Endothelial cell of umbilical vein (primary cell): ENCODE measurements at regions of chr6 and their contacts with region 1.

Region 1: GRCh38 chr6:157314705-157315321 is 8.5 kb downstream of the TMEM242 start:
- DNase-seq: peak; percentile 79
- H3K4me3 ChIP-seq: no peak overlapping the region
- H3K27ac ChIP-seq: no peak overlapping the region
- H3K4me1 ChIP-seq: peaks cover 20% of the 10 kb centered on the region
- H3K27me3 ChIP-seq: no peaks in the 10 kb centered on the region
- CTCF ChIP-seq: peak; percentile 59 to 68
- POLR2A ChIP-seq: no peak

Region 2: DNA sequence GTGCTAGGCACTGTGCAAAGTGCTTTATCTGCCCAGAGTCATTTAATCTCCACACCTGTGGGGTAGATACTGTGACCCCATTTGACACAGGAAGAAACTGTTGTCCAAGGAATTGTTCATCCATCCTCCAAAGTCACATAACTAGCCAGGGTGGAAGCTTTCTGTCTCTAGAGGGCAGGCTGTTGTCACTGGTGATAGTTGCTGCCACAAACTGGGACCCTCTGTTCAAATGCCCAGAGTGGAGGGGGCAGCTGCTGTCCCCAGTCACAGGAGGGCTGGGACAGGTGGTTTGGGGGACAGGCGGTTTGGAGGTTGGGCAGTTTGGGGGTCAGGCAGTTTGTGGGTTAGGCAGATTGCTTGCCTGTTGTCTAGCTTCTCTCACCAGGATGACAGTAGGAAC is 24.6 kb after region 1 on chr6:
- CTCF ChIA-PET with region 1: interaction called, 92 read pairs
- POLR2A ChIA-PET with region 1: interaction called, 3 read pairs
- dilution Hi-C with region 1: no loop called
- intact Hi-C with region 1: loop called (anchors 1 kb)
- DNase-seq: no peak
- H3K4me3 ChIP-seq: no peak overlapping the region
- H3K27ac ChIP-seq: no peak overlapping the region
- H3K4me1 ChIP-seq: no peaks in the 10 kb centered on the region
- H3K27me3 ChIP-seq: peaks cover 9 to 20% of the 10 kb centered on the region in 2 experiments
- CTCF ChIP-seq: no peak
- POLR2A ChIP-seq: no peak

Region 3: DNA sequence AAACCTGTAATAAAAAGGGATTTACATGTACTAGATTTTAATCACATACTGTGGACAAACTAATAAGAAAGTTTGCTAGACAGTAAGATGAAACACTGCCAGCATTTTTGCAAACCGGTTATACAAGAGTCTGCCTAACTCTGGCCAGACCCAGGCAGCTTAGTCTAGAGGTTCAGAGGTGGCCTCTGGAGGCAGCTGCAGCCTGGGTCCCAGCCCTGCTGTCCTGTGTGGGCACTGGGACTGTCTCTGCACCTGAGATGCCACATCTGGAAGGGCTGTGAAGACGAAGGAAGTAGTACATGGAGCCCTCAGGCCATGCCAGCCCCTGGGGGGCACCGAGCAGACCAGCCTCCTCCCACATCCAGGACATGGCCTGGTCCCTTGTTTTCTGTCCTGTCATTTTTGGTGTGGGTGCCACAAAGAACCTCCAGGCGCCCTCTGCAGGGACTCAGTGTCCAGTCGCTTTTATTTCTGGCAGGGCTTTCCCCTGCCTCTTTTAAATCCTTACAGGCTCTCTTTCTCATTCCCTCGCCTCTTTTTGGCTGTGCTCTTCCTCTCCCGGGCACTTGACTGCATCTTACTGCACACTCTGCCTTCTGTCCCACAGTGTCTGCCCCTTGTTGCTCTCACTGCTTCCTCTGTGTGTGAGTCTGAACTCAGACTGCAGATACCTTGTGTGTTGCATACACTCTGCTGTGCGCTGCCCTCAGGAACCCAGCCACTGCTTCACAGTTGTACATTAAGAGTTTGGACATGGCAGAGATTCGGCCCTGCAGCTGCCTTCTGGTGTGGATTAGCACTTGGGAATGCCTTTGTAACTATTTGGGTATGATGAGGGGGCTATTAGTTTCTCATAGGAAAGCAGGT is 282.9 kb after region 1 on chr6:
- CTCF ChIA-PET with region 1: interaction called, 38 read pairs
- POLR2A ChIA-PET with region 1: no interaction called
- dilution Hi-C with region 1: no loop called
- intact Hi-C with region 1: loop called (anchors 1 kb)
- DNase-seq: peak; percentile 57
- H3K4me3 ChIP-seq: no peak overlapping the region
- H3K27ac ChIP-seq: no peak overlapping the region
- H3K4me1 ChIP-seq: no peaks in the 10 kb centered on the region
- H3K27me3 ChIP-seq: no peaks in the 10 kb centered on the region
- CTCF ChIP-seq: peak; percentile 50 to 68
- POLR2A ChIP-seq: no peak

Region 4: GRCh38 chr6:157650261-157650640 is 335.4 kb after region 1 on chr6:
- CTCF ChIA-PET with region 1: no interaction called
- POLR2A ChIA-PET with region 1: no interaction called
- dilution Hi-C with region 1: no loop called
- intact Hi-C with region 1: no loop called
- DNase-seq: no peak
- H3K4me3 ChIP-seq: no peak overlapping the region
- H3K27ac ChIP-seq: no peak overlapping the region
- H3K4me1 ChIP-seq: peaks cover 7% of the 10 kb centered on the region
- H3K27me3 ChIP-seq: no peaks in the 10 kb centered on the region
- CTCF ChIP-seq: no peak
- POLR2A ChIP-seq: no peak

Region 5: GRCh38 chr6:157667211-157668008 is 352.6 kb after region 1 on chr6:
- CTCF ChIA-PET with region 1: interaction called, 121 read pairs
- POLR2A ChIA-PET with region 1: interaction called, 4 read pairs
- dilution Hi-C with region 1: no loop called
- intact Hi-C with region 1: loop called (anchors 1 kb)
- DNase-seq: peak; percentile 73
- H3K4me3 ChIP-seq: no peak overlapping the region
- H3K27ac ChIP-seq: no peak overlapping the region
- H3K4me1 ChIP-seq: peaks cover 7% of the 10 kb centered on the region
- H3K27me3 ChIP-seq: no peaks in the 10 kb centered on the region
- CTCF ChIP-seq: peak; percentile 75 to 88
- POLR2A ChIP-seq: no peak

Region 6: GRCh38 chr6:157721437-157722229 is 406.8 kb after region 1 on chr6:
- CTCF ChIA-PET with region 1: no interaction called
- POLR2A ChIA-PET with region 1: no interaction called
- dilution Hi-C with region 1: no loop called
- intact Hi-C with region 1: no loop called
- DNase-seq: no peak
- H3K4me3 ChIP-seq: no peak overlapping the region
- H3K27ac ChIP-seq: no peak overlapping the region
- H3K4me1 ChIP-seq: peaks cover 4% of the 10 kb centered on the region
- H3K27me3 ChIP-seq: peaks cover 6 to 23% of the 10 kb centered on the region in 2 experiments
- CTCF ChIP-seq: no peak
- POLR2A ChIP-seq: no peak

Region 7: DNA sequence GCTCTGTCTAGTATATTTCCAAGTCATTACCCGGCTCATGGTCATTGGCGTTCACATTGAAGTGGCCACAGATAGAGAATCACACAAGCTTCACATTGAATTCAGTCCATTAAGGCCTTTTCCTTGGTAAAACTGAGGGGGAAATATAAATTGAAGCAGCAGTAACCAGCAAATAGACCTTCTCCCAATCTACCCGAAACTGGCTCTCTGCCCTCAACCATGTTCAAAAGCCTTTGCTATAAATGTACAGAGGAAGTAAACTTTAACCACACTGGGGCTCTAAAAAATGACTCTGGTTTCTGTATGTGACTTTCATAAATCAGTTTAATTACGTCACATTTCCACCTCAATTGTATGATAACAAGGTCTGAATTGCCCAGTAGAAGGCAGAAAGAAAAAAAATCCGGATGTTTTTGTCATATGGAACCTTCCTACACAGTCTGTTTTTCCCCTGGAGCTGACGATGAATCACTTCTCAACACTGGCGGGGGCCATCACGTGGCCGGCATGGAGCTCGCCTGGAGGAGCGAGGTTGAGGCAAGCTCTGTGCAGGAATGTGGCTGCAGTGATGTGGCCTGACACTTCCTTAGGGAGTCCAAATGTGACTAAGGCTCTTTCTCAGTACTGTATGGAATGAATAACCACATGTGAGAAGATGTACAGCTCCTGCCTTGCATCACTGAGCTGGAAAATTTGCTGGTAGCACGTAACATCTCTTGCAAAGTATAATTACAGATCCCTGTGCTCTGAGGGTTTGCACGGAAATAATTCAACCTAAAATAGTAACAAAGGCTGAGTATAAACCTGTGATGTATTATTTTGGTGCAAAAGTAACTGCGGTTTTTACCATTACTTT is 449.6 kb after region 1 on chr6:
- CTCF ChIA-PET with region 1: interaction called, 4 read pairs
- POLR2A ChIA-PET with region 1: no interaction called
- dilution Hi-C with region 1: no loop called
- intact Hi-C with region 1: loop called (anchors 5 kb)
- DNase-seq: peak; percentile 99
- H3K4me3 ChIP-seq: peak overlapping the region in 1 of 3 experiments; percentile 4
- H3K27ac ChIP-seq: peak overlapping the region; percentile 97
- H3K4me1 ChIP-seq: peaks cover 51% of the 10 kb centered on the region
- H3K27me3 ChIP-seq: no peaks in the 10 kb centered on the region
- CTCF ChIP-seq: no peak
- POLR2A ChIP-seq: no peak

Region 8: DNA sequence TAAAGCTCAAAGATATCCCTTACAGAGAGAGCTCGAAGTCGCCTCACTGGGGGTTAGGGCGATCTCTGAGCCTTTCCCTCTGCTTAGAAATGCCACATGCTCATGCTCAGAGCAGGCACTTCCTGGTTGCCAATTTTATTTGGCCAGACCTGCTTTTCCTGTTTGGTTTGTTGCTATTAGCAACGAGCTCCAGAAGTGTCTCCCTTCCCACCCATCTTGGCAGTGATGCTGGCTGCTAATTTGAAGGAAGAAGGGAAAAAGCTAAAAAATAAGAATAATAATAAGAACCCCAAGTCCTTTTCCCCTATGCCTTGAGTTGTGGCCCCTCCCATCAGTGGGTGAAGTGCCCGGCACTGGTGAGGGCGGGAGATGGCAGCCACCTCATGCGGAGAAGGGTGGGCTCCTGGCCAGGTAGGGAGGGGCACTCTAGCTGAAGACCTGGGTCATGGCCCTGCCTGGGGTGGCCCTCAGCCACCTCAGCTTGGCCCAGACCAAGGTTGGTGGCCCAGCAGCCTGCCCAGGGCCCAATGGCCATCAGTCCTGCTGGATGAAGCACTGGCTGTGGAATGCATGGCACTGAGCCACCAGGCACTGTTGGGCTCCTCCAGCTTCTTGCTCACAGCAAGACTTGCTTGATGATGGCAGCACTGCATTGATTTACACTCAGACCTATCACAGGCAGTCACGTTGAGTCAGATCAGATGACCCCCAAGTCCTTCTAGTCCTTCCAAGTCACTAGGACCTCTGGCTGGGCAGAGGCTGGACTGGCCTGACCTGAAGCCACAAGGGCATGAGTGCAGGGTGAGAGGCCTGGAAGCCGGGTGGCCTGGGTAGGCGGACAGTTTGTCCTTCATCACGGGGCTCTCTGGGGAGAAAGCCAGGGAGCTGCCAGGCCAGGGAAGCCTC is 745.9 kb after region 1 on chr6:
- CTCF ChIA-PET with region 1: no interaction called
- POLR2A ChIA-PET with region 1: no interaction called
- dilution Hi-C with region 1: no loop called
- intact Hi-C with region 1: loop called (anchors 10 kb)
- DNase-seq: peak; percentile 92
- H3K4me3 ChIP-seq: no peak overlapping the region
- H3K27ac ChIP-seq: peak overlapping the region; percentile 99
- H3K4me1 ChIP-seq: peaks cover 62% of the 10 kb centered on the region
- H3K27me3 ChIP-seq: no peaks in the 10 kb centered on the region
- CTCF ChIP-seq: no peak
- POLR2A ChIP-seq: no peak